ENCODE measurements at regions of chrX and their contacts with region 1.

Region 1: DNA sequence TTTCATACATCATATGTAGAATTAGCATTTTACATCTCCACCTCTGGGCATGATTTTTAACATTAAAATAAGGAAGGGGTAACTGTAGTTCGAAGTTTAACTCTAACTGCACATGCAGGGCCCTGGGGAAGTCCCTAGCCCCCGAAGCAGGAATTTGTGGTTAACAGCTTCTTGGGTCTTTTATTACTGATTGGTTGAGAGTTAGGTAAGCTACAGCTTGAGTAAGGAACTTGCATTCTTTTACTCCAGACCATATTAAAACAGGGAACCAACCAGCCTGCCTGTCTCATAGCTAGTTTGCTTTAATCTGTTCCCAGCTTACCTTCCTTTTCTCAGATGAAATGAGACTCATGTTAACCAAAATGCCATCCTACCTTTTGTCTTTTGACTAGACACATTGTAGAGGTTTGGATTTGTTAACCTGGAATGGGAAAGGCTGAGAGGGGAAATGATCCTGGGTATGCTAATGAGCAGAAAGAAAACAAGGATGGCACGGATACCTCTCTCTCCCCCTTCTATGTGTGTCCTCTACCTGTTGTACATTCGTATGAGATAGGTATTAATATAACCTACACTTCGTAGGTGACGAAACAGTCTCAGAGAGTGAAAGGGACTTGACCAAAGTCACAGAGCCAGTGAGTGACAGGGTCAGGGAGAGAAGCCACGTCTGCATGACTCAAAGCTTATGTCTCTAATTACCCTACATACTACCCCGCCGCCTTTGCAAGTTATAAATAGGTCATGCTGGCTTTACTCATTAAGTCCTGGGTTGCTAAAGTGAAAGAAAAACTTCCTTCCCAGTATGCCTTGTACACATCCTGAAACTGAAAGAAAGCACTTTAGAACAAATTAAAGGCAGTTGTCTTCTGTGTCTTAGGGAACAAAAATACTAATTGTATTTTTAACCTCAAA is 119.5 kb upstream of the AFF2 start:
- DNase-seq: no peak
- ATAC-seq: peak; percentile 81
- H3K4me3 Mint-ChIP-seq: peak overlapping the region; percentile 83
- H3K27ac Mint-ChIP-seq: peak overlapping the region; percentile 88
- H3K4me1 Mint-ChIP-seq: peaks cover 30% of the 10 kb centered on the region
- H3K27me3 Mint-ChIP-seq: no peaks in the 10 kb centered on the region
- CTCF ChIP-seq: no peak

Region 2: GRCh38 chrX:147911192-147912022 is 469.5 kb before region 1 on chrX and contains the start of gene FMR1:
- CTCF ChIA-PET with region 1: no interaction called
- POLR2A ChIA-PET with region 1: no interaction called
- intact Hi-C with region 1: loop called (anchors 2 kb)
- DNase-seq: peak; percentile 87
- ATAC-seq: peak; percentile 85
- H3K4me3 Mint-ChIP-seq: peak within 1 kb of the TSS; percentile 96
- H3K27ac Mint-ChIP-seq: peak within 1 kb of the TSS; percentile 90
- H3K4me1 Mint-ChIP-seq: peaks cover 41% of the 10 kb centered on the region
- H3K27me3 Mint-ChIP-seq: no peaks in the 10 kb centered on the region
- CTCF ChIP-seq: no peak
- total RNA-seq, gene FMR1: 51.8 and 60.3 TPM in 2 replicates

Region 3: GRCh38 chrX:148417934-148418333 is 37.0 kb after region 1 on chrX:
- CTCF ChIA-PET with region 1: no interaction called
- POLR2A ChIA-PET with region 1: no interaction called
- intact Hi-C with region 1: loop called (anchors 1 kb)
- DNase-seq: no peak
- ATAC-seq: no peak
- H3K4me3 Mint-ChIP-seq: no peak overlapping the region
- H3K27ac Mint-ChIP-seq: no peak overlapping the region
- H3K4me1 Mint-ChIP-seq: peaks cover 16% of the 10 kb centered on the region
- H3K27me3 Mint-ChIP-seq: no peaks in the 10 kb centered on the region
- CTCF ChIP-seq: no peak

Region 4: GRCh38 chrX:148459343-148459742 is 78.4 kb after region 1 on chrX:
- CTCF ChIA-PET with region 1: no interaction called
- POLR2A ChIA-PET with region 1: interaction called, 3 read pairs
- intact Hi-C with region 1: loop called (anchors 1 kb)
- DNase-seq: peak; percentile 12
- ATAC-seq: peak; percentile 91
- H3K4me3 Mint-ChIP-seq: peak overlapping the region; percentile 53
- H3K27ac Mint-ChIP-seq: peak overlapping the region; percentile 81
- H3K4me1 Mint-ChIP-seq: peaks cover 38% of the 10 kb centered on the region
- H3K27me3 Mint-ChIP-seq: no peaks in the 10 kb centered on the region
- CTCF ChIP-seq: no peak

Region 5: GRCh38 chrX:148500423-148501385 is 119.8 kb after region 1 on chrX and contains the start of gene AFF2:
- CTCF ChIA-PET with region 1: no interaction called
- POLR2A ChIA-PET with region 1: interaction called, 4 read pairs
- intact Hi-C with region 1: loop called (anchors 1 kb)
- DNase-seq: peak; percentile 33
- ATAC-seq: peak; percentile 74
- H3K4me3 Mint-ChIP-seq: peak within 1 kb of the TSS; percentile 82
- H3K27ac Mint-ChIP-seq: no peak within 1 kb of the TSS
- H3K4me1 Mint-ChIP-seq: peaks cover 5% of the 10 kb centered on the region
- H3K27me3 Mint-ChIP-seq: peaks cover 2% of the 10 kb centered on the region
- CTCF ChIP-seq: no peak
- total RNA-seq, gene AFF2: 2.8 and 3.4 TPM in 2 replicates

Region 6: DNA sequence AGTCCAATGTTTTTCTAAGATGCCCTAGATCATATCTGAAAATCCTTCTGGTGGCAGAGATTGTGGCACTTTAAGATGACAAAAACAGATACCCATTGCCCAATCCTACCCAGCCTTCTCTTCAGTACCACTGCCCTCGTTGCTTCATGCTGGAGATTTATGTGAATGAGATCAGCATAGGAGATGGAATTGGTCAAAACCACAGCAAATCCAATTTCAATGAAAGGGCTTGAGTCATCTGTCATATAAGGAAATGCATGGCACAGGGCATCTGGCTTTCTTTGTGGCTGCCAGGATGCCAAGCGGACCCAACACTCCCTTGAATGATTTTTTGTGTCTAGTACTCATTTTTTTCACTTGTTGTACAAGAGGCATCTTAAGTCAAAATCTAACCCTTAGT is 136.3 kb after region 1 on chrX:
- CTCF ChIA-PET with region 1: no interaction called
- POLR2A ChIA-PET with region 1: no interaction called
- intact Hi-C with region 1: no loop called
- DNase-seq: no peak
- ATAC-seq: no peak
- H3K4me3 Mint-ChIP-seq: no peak overlapping the region
- H3K27ac Mint-ChIP-seq: no peak overlapping the region
- H3K4me1 Mint-ChIP-seq: peaks cover 3% of the 10 kb centered on the region
- H3K27me3 Mint-ChIP-seq: no peaks in the 10 kb centered on the region
- CTCF ChIP-seq: no peak

Region 7: GRCh38 chrX:148609515-148610327 is 228.8 kb after region 1 on chrX:
- CTCF ChIA-PET with region 1: no interaction called
- POLR2A ChIA-PET with region 1: no interaction called
- intact Hi-C with region 1: loop called (anchors 1 kb)
- DNase-seq: no peak
- ATAC-seq: peak; percentile 78
- H3K4me3 Mint-ChIP-seq: peak overlapping the region; percentile 79
- H3K27ac Mint-ChIP-seq: peak overlapping the region; percentile 89
- H3K4me1 Mint-ChIP-seq: peaks cover 39% of the 10 kb centered on the region
- H3K27me3 Mint-ChIP-seq: no peaks in the 10 kb centered on the region
- CTCF ChIP-seq: no peak

Region 8: DNA sequence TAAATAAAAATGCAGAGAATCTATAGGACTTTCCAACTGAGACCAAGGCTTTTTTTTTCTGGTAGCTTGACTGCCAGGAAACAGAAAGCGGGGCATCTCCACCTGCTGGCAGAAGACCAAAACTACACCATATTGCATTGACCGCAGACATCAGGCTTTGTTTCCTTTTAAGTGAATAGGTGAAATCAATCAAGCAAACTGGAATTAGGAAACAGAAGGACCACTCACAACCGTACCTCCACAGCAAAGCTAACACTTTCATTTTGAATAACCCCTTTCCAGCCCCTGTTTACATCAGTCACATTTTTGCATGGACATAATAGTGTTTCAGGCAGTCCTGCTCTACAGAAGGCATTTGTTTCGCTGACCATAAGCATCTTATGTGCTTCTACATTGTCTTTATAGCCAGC is 906.0 kb after region 1 on chrX:
- CTCF ChIA-PET with region 1: no interaction called
- POLR2A ChIA-PET with region 1: no interaction called
- intact Hi-C with region 1: loop called (anchors 2 kb)
- DNase-seq: no peak
- ATAC-seq: no peak
- H3K4me3 Mint-ChIP-seq: no peak overlapping the region
- H3K27ac Mint-ChIP-seq: no peak overlapping the region
- H3K4me1 Mint-ChIP-seq: no peaks in the 10 kb centered on the region
- H3K27me3 Mint-ChIP-seq: peaks cover 2% of the 10 kb centered on the region
- CTCF ChIP-seq: no peak

Measured in activated B cell treated with CpG ODN at 0.5 μM for 24 hours (primary cell).